Gastrocnemius medialis (tissue), 4 donors: ENCODE measurements at regions of chr2 and their contacts with region 1.

Region 1: GRCh38 chr2:241686649-241687425 is at the start of gene DTYMK:
- DNase-seq: peak; percentile 92 to 95
- ATAC-seq: peak; percentile 95 to 96
- H3K4me3 ChIP-seq: peak within 1 kb of the TSS; percentile 81 to 98 (median 84)
- H3K27ac ChIP-seq: peak within 1 kb of the TSS; percentile 90 to 99 (median 93)
- H3K4me1 ChIP-seq: peaks cover 27 to 30% of the 10 kb centered on the region in 2 donors
- H3K27me3 ChIP-seq: no peaks in the 10 kb centered on the region
- CTCF ChIP-seq: no peak
- POLR2A ChIP-seq: peak; percentile 93 to 96
- total RNA-seq, gene DTYMK: 3.9 to 8.2 (median 5.9) TPM

Region 2: DNA sequence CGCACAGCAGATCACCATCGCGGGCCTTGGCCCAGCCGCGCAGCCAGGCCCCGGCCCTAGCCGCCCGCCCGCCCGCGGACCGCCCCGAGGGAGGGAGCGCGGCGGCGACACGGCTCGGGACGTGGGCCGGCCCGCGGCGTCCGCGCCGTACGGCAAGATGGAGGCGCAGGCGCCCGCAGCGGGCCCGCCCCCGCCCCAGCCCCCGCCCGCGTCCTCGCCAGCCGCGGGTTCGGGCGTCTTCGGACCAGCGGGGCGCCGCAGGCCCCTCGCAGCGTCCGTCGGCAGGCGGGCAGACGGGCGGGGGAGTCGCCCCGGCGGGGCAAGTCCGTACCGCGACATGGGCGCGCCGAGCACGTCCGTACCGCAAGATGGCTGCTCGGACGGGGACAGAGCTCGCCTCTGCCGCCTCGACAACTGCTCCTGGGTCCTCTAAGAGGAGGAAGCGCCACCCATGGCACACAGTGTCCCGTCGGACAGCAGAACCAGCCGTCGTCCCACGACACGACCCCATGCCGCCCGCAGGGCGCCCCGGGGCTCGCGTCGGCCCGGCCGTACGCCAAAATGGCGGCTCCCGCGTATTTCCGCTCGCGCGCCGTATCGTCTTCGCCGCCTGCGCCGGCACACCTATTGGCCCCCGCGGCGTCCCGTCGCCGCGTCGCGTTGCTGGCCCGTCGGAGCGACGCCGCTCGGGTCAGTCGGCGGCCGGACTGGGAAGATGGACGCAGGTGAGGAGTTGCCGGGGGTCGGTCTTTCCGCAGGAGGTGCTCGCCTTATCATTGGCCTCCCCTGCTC is 49.6 kb before region 1 on chr2 and contains the starts of genes ATG4B and THAP4:
- in situ Hi-C with region 1: no loop called
- intact Hi-C with region 1: loop called (anchors 1 kb)
- DNase-seq: peak; percentile 70 to 81
- ATAC-seq: peak; percentile 90 to 91
- H3K4me3 ChIP-seq: peak within 1 kb of the TSS; percentile 73 to 95 (median 92)
- H3K27ac ChIP-seq: peak within 1 kb of the TSS; percentile 92 to 100 (median 98)
- H3K4me1 ChIP-seq: peaks cover 36 to 49% of the 10 kb centered on the region in 2 donors
- H3K27me3 ChIP-seq: no peaks in the 10 kb centered on the region
- CTCF ChIP-seq: peak in 1 of 5 experiments; percentile 51
- POLR2A ChIP-seq: peak; percentile 65 to 74
- total RNA-seq, gene ATG4B: 32.0 to 57.5 (median 49.8) TPM
- total RNA-seq, gene THAP4: 71.3 to 83.3 (median 79.9) TPM

Region 3: DNA sequence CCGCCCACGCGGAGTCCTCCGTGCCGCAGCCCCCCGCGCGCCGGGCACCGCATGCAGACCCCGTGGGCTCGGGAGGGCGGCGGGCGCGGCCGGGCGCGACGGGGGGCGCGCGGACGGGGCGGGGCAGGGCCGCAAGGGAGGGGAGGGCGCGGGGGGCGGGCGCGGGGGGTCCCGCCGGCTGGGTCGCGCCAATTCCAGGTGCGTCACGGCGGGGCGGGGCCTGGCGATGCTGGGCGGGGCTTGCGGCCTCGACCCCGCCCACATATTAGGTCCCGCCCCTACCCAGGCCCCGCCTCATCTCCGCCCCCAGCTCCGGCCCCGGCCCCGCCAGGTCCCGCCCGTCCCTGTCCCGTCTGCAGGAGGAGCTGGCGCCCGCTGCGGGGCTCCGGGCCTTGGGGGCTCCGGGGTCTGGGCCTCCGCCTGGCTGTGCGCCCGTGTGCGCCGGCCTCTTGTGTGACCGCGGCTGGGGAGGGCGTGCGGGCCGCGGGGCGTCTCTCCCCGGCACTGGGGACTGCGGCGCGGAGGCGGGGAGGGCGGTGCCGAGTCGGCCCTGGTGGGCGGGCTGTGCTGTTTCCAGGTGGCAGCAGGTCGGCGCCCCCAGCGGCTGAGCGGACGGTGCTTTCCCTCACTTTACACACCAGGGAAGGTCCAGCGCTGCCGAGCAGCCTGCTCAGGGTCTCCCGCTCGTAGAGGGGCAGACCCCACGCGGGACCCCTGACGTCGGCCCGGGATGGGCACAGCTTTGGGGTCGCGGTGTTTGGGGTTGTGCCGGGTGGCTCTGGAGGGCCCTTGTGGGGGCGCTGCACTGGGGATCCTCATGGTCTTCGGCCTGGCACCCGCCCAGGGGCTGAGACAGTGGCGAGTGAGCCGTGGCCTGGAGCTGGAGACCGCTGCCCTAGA is 15.5 kb after region 1 on chr2:
- in situ Hi-C with region 1: no loop called
- intact Hi-C with region 1: loop called (anchors 1 kb)
- DNase-seq: peak; percentile 78 to 81
- ATAC-seq: peak; percentile 83 to 85
- H3K4me3 ChIP-seq: peak overlapping the region; percentile 57 to 97 (median 82)
- H3K27ac ChIP-seq: peak overlapping the region; percentile 89 to 97 (median 94)
- H3K4me1 ChIP-seq: peaks cover 6 to 16% of the 10 kb centered on the region in 2 donors
- H3K27me3 ChIP-seq: no peaks in the 10 kb centered on the region
- CTCF ChIP-seq: peak in 4 of 5 experiments; percentile 28 to 36 (median 34)
- POLR2A ChIP-seq: no peak